Mammary epithelial cell (primary cell): ENCODE measurements at regions of chr5 and their contacts with region 1.

Region 1: DNA sequence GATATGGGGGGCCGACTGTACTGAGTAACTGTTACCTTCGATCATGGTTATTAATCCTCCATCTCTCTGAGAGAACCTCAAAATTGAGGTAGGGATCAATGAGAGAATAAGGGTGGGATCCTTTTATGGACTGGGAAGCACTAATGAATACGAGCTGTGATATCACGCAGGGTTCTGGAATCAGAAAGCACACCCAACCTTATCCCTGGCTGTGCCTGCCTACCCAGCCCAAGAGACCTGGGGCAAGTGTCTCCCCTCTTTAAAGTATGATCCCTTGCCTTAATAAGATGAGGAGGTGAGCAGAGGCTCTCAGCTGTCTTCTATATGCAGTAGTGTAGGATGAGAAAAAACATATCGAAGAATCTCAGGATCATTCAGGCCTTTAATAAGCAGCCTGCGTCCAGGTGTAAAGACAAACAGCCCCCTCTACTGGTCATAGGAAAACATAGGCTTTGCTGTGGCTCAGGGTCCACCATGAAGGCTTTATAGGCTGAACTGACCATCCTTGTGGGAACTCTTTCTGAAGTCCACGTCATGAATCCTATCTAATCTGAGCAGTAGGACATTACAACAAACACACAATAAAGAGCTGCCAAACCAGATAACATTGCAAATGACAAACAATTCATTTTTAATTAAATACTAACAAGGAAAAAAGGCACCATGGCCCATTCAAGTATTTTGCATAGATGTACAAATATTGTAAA is 16.8 kb downstream of the NIPAL4 start:
- DNase-seq: peak; percentile 37
- H3K4me3 ChIP-seq: no peak overlapping the region
- H3K27ac ChIP-seq: no peak overlapping the region
- H3K4me1 ChIP-seq: no peaks in the 10 kb centered on the region
- H3K27me3 ChIP-seq: no peaks in the 10 kb centered on the region
- CTCF ChIP-seq: peak; percentile 84 to 86

Region 2: DNA sequence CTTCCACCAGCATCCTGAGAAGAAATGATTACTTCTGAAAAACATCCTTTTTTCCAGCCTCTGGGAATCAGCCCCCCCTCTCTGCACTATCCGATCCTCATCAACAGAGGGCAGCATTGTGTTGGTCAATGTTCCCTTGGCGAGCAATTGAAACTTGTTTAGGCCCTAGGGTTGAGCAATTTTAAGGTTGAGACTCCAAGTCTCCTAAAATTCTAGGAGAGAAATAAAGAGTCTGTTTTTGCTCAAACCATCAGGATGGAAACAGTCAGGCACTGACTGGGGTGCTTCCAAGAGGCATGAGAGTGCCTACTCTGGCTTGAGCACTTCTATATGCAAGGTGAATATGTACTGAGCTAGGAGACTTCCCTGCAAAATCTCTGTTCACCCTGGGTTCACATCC is 223.3 kb before region 1 on chr5:
- CTCF ChIA-PET with region 1: no interaction called
- dilution Hi-C with region 1: no loop called
- in situ Hi-C with region 1: loop called in 1 of 2 experiments (anchors 10 kb)
- intact Hi-C with region 1: loop called (anchors 2 kb)
- DNase-seq: peak; percentile 29
- H3K4me3 ChIP-seq: no peak overlapping the region
- H3K27ac ChIP-seq: no peak overlapping the region
- H3K4me1 ChIP-seq: no peaks in the 10 kb centered on the region
- H3K27me3 ChIP-seq: no peaks in the 10 kb centered on the region
- CTCF ChIP-seq: peak; percentile 85 to 94

Region 3: GRCh38 chr5:157342822-157343402 is 133.9 kb before region 1 on chr5:
- CTCF ChIA-PET with region 1: interaction called, 3 read pairs
- dilution Hi-C with region 1: no loop called
- in situ Hi-C with region 1: loop called in 1 of 2 experiments (anchors 5 kb)
- intact Hi-C with region 1: loop called (anchors 1 kb)
- DNase-seq: peak; percentile 6
- H3K4me3 ChIP-seq: no peak overlapping the region
- H3K27ac ChIP-seq: no peak overlapping the region
- H3K4me1 ChIP-seq: no peaks in the 10 kb centered on the region
- H3K27me3 ChIP-seq: no peaks in the 10 kb centered on the region
- CTCF ChIP-seq: peak; percentile 61 to 76

Region 4: GRCh38 chr5:157431544-157432200 is 45.2 kb before region 1 on chr5:
- CTCF ChIA-PET with region 1: no interaction called
- dilution Hi-C with region 1: no loop called
- in situ Hi-C with region 1: loop called in 1 of 2 experiments (anchors 5 kb)
- intact Hi-C with region 1: loop called (anchors 1 kb)
- DNase-seq: peak; percentile 50
- H3K4me3 ChIP-seq: no peak overlapping the region
- H3K27ac ChIP-seq: no peak overlapping the region
- H3K4me1 ChIP-seq: no peaks in the 10 kb centered on the region
- H3K27me3 ChIP-seq: no peaks in the 10 kb centered on the region
- CTCF ChIP-seq: peak; percentile 49 to 62

Region 5: DNA sequence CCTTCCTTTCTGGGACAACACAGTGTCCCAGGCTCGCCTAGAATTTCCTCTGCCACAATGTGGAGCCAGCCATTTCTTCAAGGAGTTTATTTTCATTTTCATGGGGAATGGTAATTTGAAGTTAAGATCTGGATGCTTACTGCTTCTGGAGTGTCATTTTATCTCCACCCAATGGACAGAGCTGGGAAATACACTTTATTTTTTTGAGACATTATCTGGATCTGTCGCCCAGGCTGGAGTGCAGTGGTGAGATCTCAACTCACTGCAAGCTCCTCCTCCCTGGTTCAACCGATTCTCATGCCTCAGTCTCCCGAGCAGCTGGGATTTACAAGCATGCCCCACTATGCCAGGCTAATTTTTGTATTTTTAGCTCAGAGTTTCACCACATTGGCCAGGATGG is 241.7 kb after region 1 on chr5:
- CTCF ChIA-PET with region 1: no interaction called
- dilution Hi-C with region 1: no loop called
- in situ Hi-C with region 1: loop called in 1 of 2 experiments (anchors 25 kb)
- intact Hi-C with region 1: loop called (anchors 1 kb)
- DNase-seq: peak; percentile 52
- H3K4me3 ChIP-seq: no peak overlapping the region
- H3K27ac ChIP-seq: no peak overlapping the region
- H3K4me1 ChIP-seq: no peaks in the 10 kb centered on the region
- H3K27me3 ChIP-seq: no peaks in the 10 kb centered on the region
- CTCF ChIP-seq: peak; percentile 39 to 64

Region 6: GRCh38 chr5:157820593-157821252 is 343.9 kb after region 1 on chr5:
- CTCF ChIA-PET with region 1: no interaction called
- dilution Hi-C with region 1: no loop called
- in situ Hi-C with region 1: no loop called
- intact Hi-C with region 1: no loop called
- DNase-seq: peak; percentile 14
- H3K4me3 ChIP-seq: no peak overlapping the region
- H3K27ac ChIP-seq: no peak overlapping the region
- H3K4me1 ChIP-seq: no peaks in the 10 kb centered on the region
- H3K27me3 ChIP-seq: no peaks in the 10 kb centered on the region
- CTCF ChIP-seq: peak; percentile 47 to 53